HAP-1 (cell line): ENCODE measurements at regions of chr12 and their contacts with region 1.

Region 1: DNA sequence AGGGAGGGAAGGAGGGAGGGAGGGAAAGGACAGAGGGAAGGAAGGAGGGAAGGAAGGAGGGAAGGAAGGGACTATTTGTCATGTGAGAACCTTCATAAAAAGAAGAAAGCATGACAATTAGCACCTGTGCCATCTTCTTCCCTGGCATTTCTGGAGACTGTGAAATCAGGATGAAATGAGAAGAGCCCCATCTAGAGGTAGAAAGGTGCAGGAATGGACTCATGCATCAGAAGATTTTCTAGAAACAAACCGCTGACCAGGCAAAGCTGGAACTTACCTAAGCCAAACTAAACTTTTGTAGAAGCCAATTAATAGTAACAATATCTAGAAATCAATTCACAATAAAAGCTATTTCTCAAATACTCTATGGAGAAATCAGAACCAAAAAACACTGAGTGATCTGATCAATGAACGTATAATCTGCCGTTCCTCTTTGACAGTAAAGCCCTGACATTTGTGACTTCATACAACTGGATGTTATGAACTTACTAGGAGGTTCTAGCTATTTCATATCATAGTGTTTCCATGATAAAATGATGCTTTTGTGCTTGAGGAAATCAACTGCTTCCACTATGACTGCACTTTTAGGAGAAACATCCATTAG is 24.4 kb upstream of the CRACR2A start:
- DNase-seq: peak; percentile 22 to 47
- H3K4me3 ChIP-seq: no peak overlapping the region
- H3K4me1 ChIP-seq: no peaks in the 10 kb centered on the region
- H3K27me3 ChIP-seq: peaks cover 8% of the 10 kb centered on the region

Region 2: DNA sequence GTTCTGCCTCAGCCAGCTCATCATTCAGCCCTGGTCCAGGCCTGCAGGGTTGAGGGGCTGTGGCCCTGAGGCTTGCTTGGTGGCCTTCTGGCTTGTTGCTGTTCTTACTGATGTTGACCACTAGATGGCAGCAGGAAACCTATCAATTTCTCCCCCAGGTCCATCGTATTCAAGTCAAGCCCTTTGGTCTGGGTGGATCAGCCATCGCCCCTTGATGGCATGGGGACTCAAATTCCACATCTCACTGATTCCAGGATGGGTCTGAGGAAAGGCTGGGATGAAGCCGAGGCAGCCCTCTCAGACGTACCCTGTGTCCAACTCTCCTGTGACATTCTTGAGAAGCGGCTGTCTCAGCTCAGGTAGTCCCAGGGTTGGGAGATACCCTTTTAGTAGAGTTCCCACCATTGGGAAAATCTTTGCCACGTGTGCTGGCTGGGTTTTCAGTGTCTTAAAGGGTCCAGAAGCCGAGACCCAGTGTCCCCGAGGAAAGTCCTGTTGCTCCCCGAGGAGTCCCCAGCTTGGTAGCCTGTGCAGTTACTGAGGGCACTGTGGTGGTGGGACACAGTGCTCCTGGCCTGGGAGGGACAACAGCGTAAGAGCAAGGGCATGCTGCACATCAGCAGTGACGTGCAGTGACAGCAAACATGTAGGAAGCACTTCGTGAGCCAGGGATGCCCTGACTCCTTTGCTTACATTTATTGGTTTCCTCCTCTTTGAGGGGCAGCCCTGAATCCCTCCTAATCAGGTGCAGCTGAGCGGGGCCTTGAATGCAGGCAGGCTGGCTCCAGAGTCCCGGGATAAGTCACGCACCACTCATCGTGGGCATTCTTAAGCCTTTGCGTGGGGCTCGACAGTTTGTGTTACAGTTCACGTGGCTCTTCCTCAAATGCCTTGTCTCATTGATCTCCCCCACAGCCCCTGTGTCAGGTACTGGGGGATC is 641.5 kb before region 1 on chr12:
- in situ Hi-C with region 1: loop called (anchors 25 kb)
- DNase-seq: peak; percentile 60 to 61
- H3K4me3 ChIP-seq: no peak overlapping the region
- H3K4me1 ChIP-seq: no peaks in the 10 kb centered on the region
- H3K27me3 ChIP-seq: no peaks in the 10 kb centered on the region

Region 3: GRCh38 chr12:3299929-3300832 is 477.1 kb before region 1 on chr12:
- in situ Hi-C with region 1: loop called (anchors 10 kb)
- DNase-seq: peak; percentile 68 to 93
- H3K4me3 ChIP-seq: no peak overlapping the region
- H3K4me1 ChIP-seq: peaks cover 8% of the 10 kb centered on the region
- H3K27me3 ChIP-seq: peaks cover 16% of the 10 kb centered on the region

Region 4: DNA sequence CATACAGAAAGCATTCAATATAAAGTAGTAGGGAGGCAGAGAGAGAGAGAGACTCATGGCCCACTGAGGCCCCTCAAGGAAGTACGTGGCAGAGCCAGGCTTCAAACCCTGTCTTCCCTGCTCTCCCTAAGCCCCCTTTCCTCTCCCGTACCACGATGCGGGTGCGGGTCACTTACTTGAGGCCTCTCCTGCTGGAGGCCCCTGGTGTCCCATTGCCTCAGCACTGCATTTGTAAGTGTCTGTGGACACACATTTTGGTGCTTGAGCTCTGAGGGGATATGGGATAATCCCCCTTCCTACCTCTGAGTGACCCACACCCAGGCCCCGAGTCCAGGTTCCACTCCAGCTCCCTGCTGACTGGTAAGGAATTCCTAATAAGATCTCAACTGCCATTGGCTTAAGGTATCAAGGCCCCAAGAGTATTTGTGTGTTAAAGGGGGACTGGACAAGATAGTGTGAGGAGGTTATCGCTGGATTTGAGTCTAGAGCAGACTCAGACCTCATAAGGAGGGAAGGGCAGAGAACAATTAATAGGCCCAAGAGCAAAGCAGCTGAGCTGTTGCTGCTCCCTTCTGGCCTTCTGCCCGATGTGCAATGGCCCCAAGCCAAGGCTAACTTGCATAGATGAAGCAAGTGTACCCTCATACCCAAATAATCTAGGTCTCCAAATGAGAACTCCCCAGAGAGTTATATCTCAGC is 96.3 kb before region 1 on chr12:
- in situ Hi-C with region 1: no loop called
- DNase-seq: no peak
- H3K4me3 ChIP-seq: no peak overlapping the region
- H3K4me1 ChIP-seq: no peaks in the 10 kb centered on the region
- H3K27me3 ChIP-seq: no peaks in the 10 kb centered on the region